ENCODE measurements at regions of chr6 and their contacts with region 1.

Region 1: GRCh38 chr6:142387997-142388815 is 86.4 kb downstream of the ADGRG6 start:
- ATAC-seq: peak in 5 of 8 experiments; percentile 55 to 83 (median 73)
- H3K4me3 ChIP-seq: no peak overlapping the region
- H3K27ac ChIP-seq: no peak overlapping the region
- H3K4me1 ChIP-seq: no peaks in the 10 kb centered on the region

Region 2: DNA sequence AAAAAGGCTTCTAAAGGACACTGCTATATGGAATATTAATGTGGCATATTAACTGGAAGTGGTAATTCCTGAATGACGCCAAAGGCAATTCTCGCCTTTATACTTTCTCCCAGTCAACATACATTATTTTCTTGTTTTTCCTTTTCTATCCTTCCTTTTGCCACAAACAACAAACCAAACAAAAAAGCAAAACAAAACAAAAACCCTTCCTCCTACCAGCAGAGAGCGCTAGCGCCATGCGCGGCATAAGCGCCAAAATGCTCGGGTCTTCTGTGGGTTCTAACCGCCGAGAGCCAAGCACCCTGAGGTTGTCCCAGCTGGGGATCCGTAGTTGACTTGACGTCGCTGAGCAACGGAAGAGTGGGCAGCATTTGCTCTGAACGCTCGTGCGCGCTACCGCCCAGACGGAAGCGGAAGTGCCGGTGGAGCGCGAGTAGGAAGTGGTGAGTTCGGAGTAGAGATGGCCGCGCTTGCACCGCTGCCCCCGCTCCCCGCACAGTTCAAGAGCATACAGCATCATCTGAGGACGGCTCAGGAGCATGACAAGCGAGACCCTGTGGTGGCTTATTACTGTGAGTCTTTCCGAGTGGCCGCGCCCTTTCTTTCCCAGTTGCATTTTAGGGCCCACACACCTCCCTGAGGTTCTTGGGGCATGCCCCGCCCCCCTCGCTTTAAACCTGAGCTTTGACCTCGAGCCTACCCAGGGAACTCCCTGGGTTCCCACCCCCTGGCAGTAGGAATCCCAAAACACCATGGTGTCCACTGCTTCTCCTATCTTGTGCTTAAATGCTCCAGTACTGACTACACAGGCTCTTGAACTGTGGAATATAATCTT is 241.2 kb before region 1 on chr6 and contains the starts of genes NMBR and VTA1:
- in situ Hi-C with region 1: loop called in 2 of 9 experiments (anchors 25 kb)
- ATAC-seq: peak; percentile 97 to 100 (median 99)
- H3K4me3 ChIP-seq: peak within 1 kb of the TSS; percentile 60 to 89 (median 76)
- H3K27ac ChIP-seq: peak within 1 kb of the TSS; percentile 20 to 69
- H3K4me1 ChIP-seq: peaks cover 9 to 21% of the 10 kb centered on the region in 2 donors
- total RNA-seq, gene NMBR: 0.14 to 1.7 (median 0.43) TPM in 3 of 8 experiments, not detected in the others
- total RNA-seq, gene VTA1: 49.3 to 78.3 (median 57.4) TPM

Region 3: DNA sequence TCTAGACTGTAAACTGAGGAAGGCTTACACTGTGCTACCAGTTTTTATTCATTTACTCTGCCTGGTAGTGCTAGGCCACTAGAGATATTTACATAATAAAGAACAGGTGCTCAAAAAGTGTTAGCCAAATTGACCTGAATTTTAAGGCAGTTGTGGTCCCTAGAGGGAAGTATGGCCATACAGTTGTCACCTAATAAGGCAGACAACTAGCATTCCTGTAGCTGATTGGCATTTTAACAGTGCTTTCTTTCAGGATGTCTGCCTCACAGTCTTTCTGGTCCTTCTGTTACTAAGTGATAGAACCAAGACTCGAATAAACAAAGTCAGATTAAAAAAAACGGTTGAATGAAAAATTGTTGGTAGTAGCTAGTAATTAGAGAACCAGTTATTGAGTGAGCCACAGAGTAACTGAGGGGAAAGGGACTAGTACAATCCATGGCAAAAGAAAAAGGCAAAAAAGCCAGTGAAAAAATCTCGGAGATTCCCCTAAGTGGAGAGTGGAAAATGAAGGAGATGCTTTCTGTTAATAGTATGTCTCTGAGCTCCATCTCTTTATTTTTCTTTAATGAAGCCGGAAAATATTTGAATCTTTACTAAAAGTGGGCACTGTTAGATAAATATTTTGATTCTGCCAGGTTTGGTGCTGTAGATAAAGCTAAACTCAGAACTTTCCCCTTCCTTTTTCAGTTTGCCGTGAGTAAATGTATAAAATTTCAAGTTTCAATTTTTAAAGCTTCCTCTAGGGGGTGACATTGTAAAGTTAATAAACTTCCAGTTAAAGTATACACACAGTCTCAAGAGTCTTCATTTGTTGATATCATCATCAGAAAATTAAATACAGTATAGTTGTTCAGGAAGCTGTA is 232.1 kb before region 1 on chr6:
- in situ Hi-C with region 1: loop called in 1 of 9 experiments (anchors 25 kb)
- ATAC-seq: peak in 2 of 8 experiments; percentile 43 to 53
- H3K4me3 ChIP-seq: no peak overlapping the region
- H3K27ac ChIP-seq: no peak overlapping the region
- H3K4me1 ChIP-seq: no peaks in the 10 kb centered on the region

Region 4: GRCh38 chr6:142246960-142247359 is 141.2 kb before region 1 on chr6:
- in situ Hi-C with region 1: loop called in 1 of 9 experiments (anchors 25 kb)
- ATAC-seq: no peak
- H3K4me3 ChIP-seq: no peak overlapping the region
- H3K27ac ChIP-seq: no peak overlapping the region
- H3K4me1 ChIP-seq: no peaks in the 10 kb centered on the region

Measured in motor neuron (in vitro differentiated cells).